RWPE1 (cell line): ENCODE measurements at regions of chr4 and their contacts with region 1.

Region 1: GRCh38 chr4:170047771-170048354 is 21.7 kb upstream of the MFAP3L start:
- DNase-seq: peak; percentile 18
- H3K27ac ChIP-seq: no peak overlapping the region
- CTCF ChIP-seq: peak; percentile 81

Region 2: GRCh38 chr4:169810325-169811323 is 237.2 kb before region 1 on chr4:
- CTCF ChIA-PET with region 1: interaction called, 13 read pairs
- POLR2A ChIA-PET with region 1: no interaction called
- DNase-seq: peak; percentile 70
- H3K27ac ChIP-seq: no peak overlapping the region
- CTCF ChIP-seq: peak; percentile 86